ENCODE measurements at regions of chr17 and their contacts with region 1.

Region 1: GRCh38 chr17:30449480-30449879 is 27.7 kb upstream of the GOSR1 start:
- DNase-seq: no peak
- H3K4me3 ChIP-seq: no peak overlapping the region
- H3K27ac ChIP-seq: peak overlapping the region in 1 of 2 donors; percentile 36
- H3K4me1 ChIP-seq: peaks cover 4 to 5% of the 10 kb centered on the region in 2 donors
- H3K27me3 ChIP-seq: no peaks in the 10 kb centered on the region
- CTCF ChIP-seq: no peak

Region 2: GRCh38 chr17:30344283-30345088 is 105.0 kb before region 1 on chr17:
- intact Hi-C with region 1: loop called (anchors 5 kb)
- DNase-seq: no peak
- H3K4me3 ChIP-seq: no peak overlapping the region
- H3K27ac ChIP-seq: peak overlapping the region; percentile 28 to 38
- H3K4me1 ChIP-seq: peaks cover 0 to 4% of the 10 kb centered on the region in 2 donors
- H3K27me3 ChIP-seq: no peaks in the 10 kb centered on the region
- CTCF ChIP-seq: no peak

Measured in ascending aorta (tissue), 2 donors.